ENCODE measurements at regions of chr3 and their contacts with region 1.

Region 1: DNA sequence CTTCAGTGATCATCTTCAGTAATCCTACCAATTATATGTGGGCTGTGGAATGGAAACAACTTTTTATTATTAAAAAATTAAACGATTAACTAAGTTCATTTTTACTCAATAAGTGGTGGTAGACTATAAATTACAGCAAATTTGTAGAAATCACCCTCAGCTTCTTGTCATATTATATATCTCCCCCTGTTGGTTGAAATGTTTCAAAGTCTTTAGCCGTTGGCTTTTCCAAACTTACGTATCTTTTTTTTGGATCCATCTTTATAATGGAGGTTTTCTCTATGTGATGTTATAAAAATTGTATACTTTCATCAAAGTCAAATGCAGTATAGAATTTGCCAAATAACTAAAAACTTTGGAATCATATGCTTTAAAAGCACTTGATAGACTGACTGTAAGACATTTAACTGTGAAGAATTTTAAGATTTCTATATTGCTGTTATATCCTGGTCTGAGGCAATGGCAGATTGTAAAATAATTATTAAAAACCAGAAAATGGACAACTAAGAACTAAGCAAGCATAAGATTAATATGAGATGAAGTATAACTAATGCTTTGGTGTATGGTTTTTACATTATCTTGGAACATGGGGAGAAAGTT is 44.7 kb downstream of the ATP11B start:
- DNase-seq: no peak
- ATAC-seq: no peak
- H3K4me3 Mint-ChIP-seq: no peak overlapping the region
- H3K27ac Mint-ChIP-seq: no peak overlapping the region
- H3K4me1 Mint-ChIP-seq: no peaks in the 10 kb centered on the region
- H3K27me3 Mint-ChIP-seq: no peaks in the 10 kb centered on the region
- CTCF ChIP-seq: no peak

Region 2: GRCh38 chr3:182544542-182544941 is 293.4 kb before region 1 on chr3:
- CTCF ChIA-PET with region 1: no interaction called
- POLR2A ChIA-PET with region 1: no interaction called
- intact Hi-C with region 1: no loop called
- DNase-seq: no peak
- ATAC-seq: no peak
- H3K4me3 Mint-ChIP-seq: no peak overlapping the region
- H3K27ac Mint-ChIP-seq: no peak overlapping the region
- H3K4me1 Mint-ChIP-seq: no peaks in the 10 kb centered on the region
- H3K27me3 Mint-ChIP-seq: peaks cover 1% of the 10 kb centered on the region
- CTCF ChIP-seq: no peak

Region 3: DNA sequence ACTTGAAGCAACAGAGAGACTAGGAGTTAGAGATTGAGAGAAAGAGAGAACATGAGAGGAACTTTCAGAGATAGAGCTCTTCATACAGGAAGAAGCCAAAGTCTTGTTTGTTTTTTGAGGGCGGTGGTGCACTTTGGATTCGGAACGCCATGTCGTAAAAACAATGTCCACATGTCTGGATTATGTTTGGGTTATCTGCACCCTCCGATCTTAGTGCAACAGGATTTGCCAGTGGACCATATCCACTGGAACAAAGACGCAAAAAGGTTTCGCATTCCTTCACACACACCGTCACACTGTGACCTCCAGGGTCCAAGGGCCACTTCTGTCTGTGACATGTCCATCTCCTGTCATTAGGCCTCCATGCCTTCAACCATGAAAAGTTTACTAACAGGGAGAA is 186.5 kb before region 1 on chr3:
- CTCF ChIA-PET with region 1: no interaction called
- POLR2A ChIA-PET with region 1: no interaction called
- intact Hi-C with region 1: no loop called
- DNase-seq: no peak
- ATAC-seq: no peak
- H3K4me3 Mint-ChIP-seq: no peak overlapping the region
- H3K27ac Mint-ChIP-seq: no peak overlapping the region
- H3K4me1 Mint-ChIP-seq: no peaks in the 10 kb centered on the region
- H3K27me3 Mint-ChIP-seq: peaks cover 1% of the 10 kb centered on the region
- CTCF ChIP-seq: no peak

Region 4: DNA sequence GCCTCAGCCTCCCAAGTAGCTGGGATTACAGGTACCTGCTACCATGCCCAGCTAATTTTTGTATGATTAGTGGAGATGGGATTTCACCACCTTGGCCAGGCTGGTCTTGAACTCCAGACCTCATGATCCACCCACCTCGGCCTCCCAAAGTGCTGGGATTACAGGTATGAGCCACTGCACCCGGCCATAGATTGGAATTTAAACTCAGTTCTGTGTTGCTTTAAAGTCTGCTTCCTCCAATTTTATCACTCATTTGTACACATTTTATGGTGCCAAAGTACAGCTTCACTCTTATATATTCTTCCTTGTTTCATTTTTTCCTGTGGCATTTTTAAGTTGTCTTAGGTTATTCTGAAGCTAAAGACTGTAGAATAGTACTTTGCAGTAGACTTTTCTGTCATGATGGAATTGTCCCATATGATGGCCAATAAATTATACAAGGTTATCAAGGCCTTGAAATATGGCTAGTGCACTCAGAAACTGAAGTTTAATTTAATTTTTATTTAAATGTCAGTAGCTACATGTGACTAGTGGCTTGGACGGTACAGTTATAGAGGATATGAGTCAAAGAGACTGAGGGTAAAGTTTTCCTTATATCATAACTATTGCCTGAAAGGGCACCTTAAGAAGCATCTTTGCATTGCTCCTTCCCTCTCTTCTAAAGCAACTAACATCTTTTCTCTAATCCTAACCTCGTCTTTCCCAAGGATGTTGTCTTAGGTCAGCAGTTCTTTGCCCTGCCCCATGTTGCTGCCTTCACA is 16.6 kb before region 1 on chr3:
- CTCF ChIA-PET with region 1: interaction called, 3 read pairs
- POLR2A ChIA-PET with region 1: no interaction called
- intact Hi-C with region 1: loop called (anchors 2 kb)
- DNase-seq: no peak
- ATAC-seq: no peak
- H3K4me3 Mint-ChIP-seq: no peak overlapping the region
- H3K27ac Mint-ChIP-seq: no peak overlapping the region
- H3K4me1 Mint-ChIP-seq: peaks cover 21% of the 10 kb centered on the region
- H3K27me3 Mint-ChIP-seq: no peaks in the 10 kb centered on the region
- CTCF ChIP-seq: no peak

Measured in activated B cell treated with CpG ODN at 0.5 μM for 24 hours (primary cell).